CD14-positive monocyte (primary cell): ENCODE measurements at regions of chr3 and their contacts with region 1.

Region 1: DNA sequence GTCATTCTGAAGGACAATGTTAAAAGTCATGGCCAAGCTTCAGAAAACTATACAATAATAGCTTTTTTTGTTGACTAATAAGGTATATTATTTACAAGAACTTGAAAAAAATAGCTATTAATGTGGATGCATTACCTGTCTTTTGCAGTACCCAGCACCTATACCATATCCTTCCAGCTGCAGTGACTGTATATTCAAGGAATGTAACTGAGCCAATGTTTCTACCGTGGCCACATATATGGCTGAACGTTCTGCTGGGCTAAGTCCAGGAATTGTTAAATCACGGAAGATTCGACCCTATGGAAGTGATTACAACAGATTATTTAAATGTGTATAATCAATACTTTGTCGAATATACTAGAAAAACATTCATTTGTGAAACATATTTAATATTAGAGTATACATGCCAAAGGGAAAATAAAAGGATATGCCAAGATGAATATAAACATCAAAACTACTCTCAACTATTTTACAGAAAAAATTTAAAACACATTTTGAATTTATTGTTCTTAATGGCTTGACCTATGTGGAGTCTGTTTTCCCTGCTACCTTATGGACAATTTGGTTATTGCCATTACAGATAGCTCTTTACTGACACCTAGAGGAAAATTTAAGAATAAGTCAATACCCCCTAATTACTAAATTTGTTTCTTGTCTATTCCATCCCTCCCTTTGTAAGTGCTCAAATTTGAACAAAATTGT is 17.6 kb downstream of the ACAD11 start:
- DNase-seq: peak; percentile 5 to 45 (median 31)
- H3K4me3 ChIP-seq: no peak overlapping the region
- H3K4me3 Mint-ChIP-seq: no peak overlapping the region
- H3K27ac ChIP-seq: no peak overlapping the region
- H3K27ac Mint-ChIP-seq: no peak overlapping the region
- H3K4me1 ChIP-seq: no peaks in the 10 kb centered on the region
- H3K4me1 Mint-ChIP-seq: peaks cover 8% of the 10 kb centered on the region
- H3K27me3 ChIP-seq: no peaks in the 10 kb centered on the region
- H3K27me3 Mint-ChIP-seq: peaks cover 0 to 1% (median 0%) of the 10 kb centered on the region in 3 donors
- CTCF ChIP-seq: peak; percentile 80

Region 2: DNA sequence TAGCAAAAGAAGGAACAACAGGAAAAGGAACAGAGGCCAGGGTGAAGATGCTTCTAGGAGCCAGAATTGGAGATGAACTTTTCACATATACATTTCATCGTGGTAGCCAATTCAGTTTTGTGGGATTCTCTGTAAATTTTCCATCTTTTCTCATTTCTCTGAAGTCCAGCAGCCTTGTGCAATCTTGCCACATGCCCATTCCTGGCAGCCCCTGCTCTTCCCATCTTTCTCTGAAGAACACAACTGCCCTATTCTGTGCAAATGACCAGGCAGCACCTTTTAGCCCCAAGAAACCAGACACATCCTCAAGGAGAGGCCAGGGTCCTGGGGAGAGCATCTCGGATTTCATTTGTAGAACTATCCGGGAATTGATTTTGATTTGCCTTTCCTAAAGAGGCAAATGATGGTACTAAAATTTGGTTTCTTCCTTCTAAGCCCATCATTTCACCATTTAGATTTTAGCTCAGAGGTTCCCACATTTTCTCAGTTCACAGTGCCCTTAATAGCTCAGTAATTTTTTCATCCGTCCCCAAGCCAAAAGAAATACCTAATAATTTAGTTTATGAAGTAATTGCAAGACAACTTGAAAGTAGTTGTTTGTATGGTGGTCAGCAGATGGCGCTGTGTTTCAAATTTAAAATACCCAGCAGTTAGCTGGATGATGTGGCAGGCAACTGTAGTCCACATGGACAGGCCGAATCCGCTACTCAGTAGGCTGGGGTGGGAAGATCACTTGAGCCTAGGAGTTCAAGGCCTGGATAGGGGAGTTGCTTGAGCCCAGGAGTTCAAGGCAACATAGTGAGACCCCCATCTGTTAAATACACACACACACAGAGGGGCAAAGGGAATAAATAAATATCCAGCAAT is 106.2 kb before region 1 on chr3:
- intact Hi-C with region 1: loop called (anchors 1 to 2 kb)
- DNase-seq: peak; percentile 35 to 49 (median 43)
- H3K4me3 ChIP-seq: no peak overlapping the region
- H3K4me3 Mint-ChIP-seq: no peak overlapping the region
- H3K27ac ChIP-seq: peak overlapping the region in 1 of 2 donors; percentile 11
- H3K27ac Mint-ChIP-seq: peak overlapping the region in 2 of 7 donors; percentile 16 to 35
- H3K4me1 ChIP-seq: no peaks in the 10 kb centered on the region
- H3K4me1 Mint-ChIP-seq: no peaks in the 10 kb centered on the region
- H3K27me3 ChIP-seq: no peaks in the 10 kb centered on the region
- H3K27me3 Mint-ChIP-seq: peaks cover 0 to 2% (median 0%) of the 10 kb centered on the region in 3 donors
- CTCF ChIP-seq: peak; percentile 78